Adrenal gland (tissue), 19 donors: ENCODE measurements at regions of chr19 and their contacts with region 1.

Region 1: DNA sequence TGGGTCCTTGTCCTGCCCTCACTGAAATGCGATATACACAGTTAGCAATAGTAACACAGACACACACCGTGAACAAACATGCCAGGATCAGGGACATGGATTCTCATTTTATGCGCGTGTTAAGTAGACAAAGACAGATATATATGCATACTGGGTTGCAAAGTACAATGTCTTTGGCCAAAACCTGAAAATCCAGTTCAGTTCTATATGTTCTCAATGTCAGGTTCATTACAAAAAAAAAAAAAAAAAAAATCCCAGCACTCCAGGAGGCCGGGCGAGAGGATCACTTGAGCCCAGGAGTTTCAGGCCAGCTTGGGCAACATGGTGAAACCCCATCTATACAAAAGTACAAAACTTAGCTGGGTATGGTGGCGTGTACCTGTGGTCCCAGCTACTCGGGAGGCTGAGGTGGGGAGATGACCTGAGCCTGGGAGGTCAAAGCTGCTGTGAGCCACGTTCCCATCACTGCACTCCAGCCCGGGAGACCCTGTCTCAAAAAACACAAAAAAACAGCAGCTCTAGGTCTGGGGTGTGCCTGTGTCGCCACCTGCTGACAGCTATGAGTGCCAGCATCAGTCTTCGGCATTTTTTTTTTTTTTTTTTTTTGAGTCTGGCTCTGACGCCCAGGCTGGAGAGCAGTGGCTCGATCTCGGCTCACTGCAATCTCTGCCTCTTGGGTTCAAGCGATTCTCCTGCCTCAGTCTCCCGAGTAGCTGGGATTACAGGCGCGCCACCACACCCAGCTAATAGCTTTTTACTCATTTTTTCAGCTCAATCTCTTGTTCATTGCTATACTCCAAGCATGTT is 10.3 kb downstream of the AP2S1 start:
- DNase-seq: peak in 5 of 7 donors; percentile 49 to 73 (median 55)
- H3K4me3 ChIP-seq: no peak overlapping the region
- H3K27ac ChIP-seq: peak overlapping the region in 1 of 5 donors; percentile 60
- H3K4me1 ChIP-seq: peaks cover 0 to 17% of the 10 kb centered on the region in 2 donors
- H3K27me3 ChIP-seq: no peaks in the 10 kb centered on the region
- CTCF ChIP-seq: peak; percentile 65 to 92 (median 80)
- POLR2A ChIP-seq: no peak

Region 2: GRCh38 chr19:46759817-46760333 is 80.5 kb before region 1 on chr19:
- intact Hi-C with region 1: loop called (anchors 5 kb)
- DNase-seq: peak in 2 of 7 donors; percentile 40 to 73
- H3K4me3 ChIP-seq: no peak overlapping the region
- H3K27ac ChIP-seq: peak overlapping the region in 3 of 5 donors; percentile 50 to 79 (median 57)
- H3K4me1 ChIP-seq: peaks cover 7 to 10% of the 10 kb centered on the region in 2 donors
- H3K27me3 ChIP-seq: no peaks in the 10 kb centered on the region
- CTCF ChIP-seq: no peak
- POLR2A ChIP-seq: no peak

Region 3: DNA sequence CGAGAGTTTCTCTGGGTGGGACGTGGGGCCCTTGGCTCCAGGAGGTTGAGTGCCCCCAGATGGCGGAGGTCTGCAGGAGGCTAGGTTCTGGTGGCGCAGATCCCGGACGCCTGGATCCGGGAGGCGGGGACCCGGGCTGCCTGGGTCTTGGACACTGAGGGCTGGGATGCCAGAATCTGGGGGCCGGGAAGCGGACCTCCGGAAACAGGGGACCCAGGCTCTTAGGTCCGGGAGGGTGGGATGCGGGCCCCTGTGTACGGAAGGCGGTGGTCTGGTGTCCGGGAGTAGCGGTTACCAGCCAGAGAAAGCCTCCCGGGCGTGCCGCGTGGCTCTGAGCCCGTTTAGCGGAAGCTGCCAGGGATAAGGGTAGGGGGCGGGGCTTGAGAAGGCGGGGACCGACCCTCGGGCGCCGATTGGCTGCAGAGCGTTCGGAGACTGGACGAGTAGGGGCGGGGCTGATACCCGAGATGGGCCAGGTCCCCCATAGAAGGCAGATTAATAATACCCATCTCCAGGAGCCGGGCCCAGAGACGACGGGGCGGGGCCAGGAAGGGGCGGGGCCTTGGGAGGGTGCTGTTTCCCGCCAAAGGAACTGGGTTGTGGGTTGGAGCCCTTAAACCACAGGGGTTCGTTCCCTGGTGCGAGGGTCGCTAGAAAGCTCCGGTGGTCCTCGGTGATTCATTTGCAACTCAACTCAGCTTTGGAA is 51.9 kb before region 1 on chr19 and contains the start of gene SLC1A5:
- intact Hi-C with region 1: no loop called
- DNase-seq: peak; percentile 88 to 97 (median 93)
- H3K4me3 ChIP-seq: peak within 1 kb of the TSS in 3 of 4 donors; percentile 19 to 72 (median 27)
- H3K27ac ChIP-seq: peak within 1 kb of the TSS in 4 of 5 donors; percentile 56 to 89 (median 78)
- H3K4me1 ChIP-seq: peaks cover 0 to 19% of the 10 kb centered on the region in 2 donors
- H3K27me3 ChIP-seq: peaks cover 4% of the 10 kb centered on the region
- CTCF ChIP-seq: no peak
- POLR2A ChIP-seq: peak; percentile 80 to 88
- total RNA-seq, gene SLC1A5: 4.7 to 56.9 (median 33.0) TPM